Heart left ventricle (tissue), 16 donors: ENCODE measurements at regions of chr6 and their contacts with region 1.

Region 1: DNA sequence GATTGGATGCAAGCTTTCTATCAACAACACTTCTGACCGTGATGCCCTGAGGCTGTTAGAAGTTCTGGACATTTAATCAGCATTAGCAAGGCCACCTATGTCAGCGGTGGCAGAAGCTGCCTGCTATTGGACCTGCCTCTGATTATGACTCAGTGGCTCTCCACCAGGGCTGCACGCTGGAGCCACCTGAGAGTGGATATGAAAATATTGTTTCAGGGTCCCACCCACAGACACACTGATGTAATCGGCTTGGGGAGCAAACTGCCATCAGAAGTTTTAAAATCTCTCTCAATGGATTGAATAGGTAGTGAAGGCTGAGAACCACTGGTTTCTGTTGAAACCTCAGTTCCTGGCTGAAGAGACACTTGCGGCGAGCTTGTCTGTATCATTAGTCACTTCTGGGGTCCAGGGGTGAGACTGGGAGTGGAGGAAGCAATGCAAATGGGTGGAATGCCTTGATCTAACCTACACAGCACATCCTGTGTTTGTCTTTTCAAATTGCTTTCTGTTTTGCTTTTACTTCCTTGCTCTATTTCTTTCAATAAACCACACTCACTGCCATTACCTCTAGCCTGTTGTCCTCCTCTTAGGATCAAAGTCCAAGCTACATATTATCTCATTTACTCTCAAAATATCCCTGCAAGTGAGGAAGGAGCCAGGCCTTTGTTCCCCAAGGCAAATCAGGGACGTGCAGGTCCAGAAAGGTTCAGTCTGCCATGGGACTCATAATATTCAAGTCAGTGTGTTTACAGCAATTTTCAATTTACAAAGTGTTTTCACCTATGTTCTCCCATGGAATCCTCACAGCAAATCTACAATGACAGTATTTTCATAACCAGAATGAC is 4.2 kb downstream of the CLIC5 start:
- DNase-seq: peak in 1 of 5 donors; percentile 59
- ATAC-seq: peak; percentile 34 to 71 (median 42)
- H3K4me3 ChIP-seq: peak overlapping the region in 10 of 12 donors; percentile 13 to 89 (median 70)
- H3K27ac ChIP-seq: peak overlapping the region; percentile 74 to 99 (median 96)
- H3K4me1 ChIP-seq: peaks cover 0 to 67% (median 48%) of the 10 kb centered on the region in 12 donors
- H3K27me3 ChIP-seq: peaks cover 0 to 13% (median 0%) of the 10 kb centered on the region in 9 donors
- CTCF ChIP-seq: no peak
- POLR2A ChIP-seq: no peak

Region 2: GRCh38 chr6:45951321-45952167 is 59.9 kb before region 1 on chr6:
- intact Hi-C with region 1: loop called in 3 of 10 experiments (anchors 5 kb)
- DNase-seq: no peak
- ATAC-seq: peak in 2 of 4 donors; percentile 21 to 59
- H3K4me3 ChIP-seq: no peak overlapping the region
- H3K27ac ChIP-seq: peak overlapping the region in 9 of 12 donors; percentile 3 to 64 (median 41)
- H3K4me1 ChIP-seq: peaks cover 0 to 85% (median 57%) of the 10 kb centered on the region in 12 donors
- H3K27me3 ChIP-seq: no peaks in the 10 kb centered on the region
- CTCF ChIP-seq: no peak
- POLR2A ChIP-seq: no peak

Region 3: DNA sequence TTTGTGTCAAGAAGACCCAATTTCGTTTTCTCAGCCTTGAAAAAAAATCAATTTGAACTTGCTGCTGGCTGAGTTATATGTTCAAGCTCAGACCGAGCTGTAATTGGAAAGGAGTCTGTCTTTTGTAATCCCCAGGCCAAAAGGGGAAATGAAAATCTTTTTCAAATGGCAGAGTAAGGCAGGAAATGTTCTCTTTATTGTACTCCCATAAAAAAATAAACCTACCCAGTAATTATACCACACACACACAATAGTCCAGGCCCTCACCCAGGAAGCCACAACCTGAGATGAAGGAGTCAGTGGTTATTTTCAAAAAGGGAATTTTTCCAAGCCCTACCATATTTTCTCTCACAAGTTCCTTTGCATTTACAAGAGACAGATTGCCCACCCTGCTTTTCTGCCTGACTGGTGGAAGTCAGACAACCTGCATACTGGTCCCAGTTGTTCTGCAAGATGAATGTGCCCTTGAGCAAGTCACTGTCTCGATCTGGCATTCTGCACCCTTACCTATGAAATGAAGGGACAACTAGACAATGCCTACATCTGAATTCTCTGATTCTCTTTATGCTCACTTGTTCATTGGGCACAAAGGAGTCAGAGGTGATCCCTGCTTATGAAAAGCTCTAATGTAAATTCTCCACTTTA is 41.0 kb before region 1 on chr6:
- intact Hi-C with region 1: loop called in 5 of 10 experiments (anchors 5 kb)
- DNase-seq: no peak
- ATAC-seq: peak in 3 of 4 donors; percentile 15 to 59 (median 17)
- H3K4me3 ChIP-seq: peak overlapping the region in 5 of 12 donors; percentile 1 to 27 (median 15)
- H3K27ac ChIP-seq: peak overlapping the region; percentile 68 to 92 (median 82)
- H3K4me1 ChIP-seq: peaks cover 0 to 94% (median 63%) of the 10 kb centered on the region in 12 donors
- H3K27me3 ChIP-seq: no peaks in the 10 kb centered on the region
- CTCF ChIP-seq: no peak
- POLR2A ChIP-seq: no peak

Region 4: GRCh38 chr6:45991189-45991588 is 20.3 kb before region 1 on chr6:
- intact Hi-C with region 1: loop called in 2 of 10 experiments (anchors 2 kb)
- DNase-seq: no peak
- ATAC-seq: no peak
- H3K4me3 ChIP-seq: no peak overlapping the region
- H3K27ac ChIP-seq: peak overlapping the region; percentile 46 to 95 (median 86)
- H3K4me1 ChIP-seq: peaks cover 0 to 75% (median 58%) of the 10 kb centered on the region in 12 donors
- H3K27me3 ChIP-seq: no peaks in the 10 kb centered on the region
- CTCF ChIP-seq: peak in 3 of 12 donors; percentile 8 to 22 (median 10)
- POLR2A ChIP-seq: no peak